IMR-90 (cell line): ENCODE measurements at regions of chr6 and their contacts with region 1.

Region 1: DNA sequence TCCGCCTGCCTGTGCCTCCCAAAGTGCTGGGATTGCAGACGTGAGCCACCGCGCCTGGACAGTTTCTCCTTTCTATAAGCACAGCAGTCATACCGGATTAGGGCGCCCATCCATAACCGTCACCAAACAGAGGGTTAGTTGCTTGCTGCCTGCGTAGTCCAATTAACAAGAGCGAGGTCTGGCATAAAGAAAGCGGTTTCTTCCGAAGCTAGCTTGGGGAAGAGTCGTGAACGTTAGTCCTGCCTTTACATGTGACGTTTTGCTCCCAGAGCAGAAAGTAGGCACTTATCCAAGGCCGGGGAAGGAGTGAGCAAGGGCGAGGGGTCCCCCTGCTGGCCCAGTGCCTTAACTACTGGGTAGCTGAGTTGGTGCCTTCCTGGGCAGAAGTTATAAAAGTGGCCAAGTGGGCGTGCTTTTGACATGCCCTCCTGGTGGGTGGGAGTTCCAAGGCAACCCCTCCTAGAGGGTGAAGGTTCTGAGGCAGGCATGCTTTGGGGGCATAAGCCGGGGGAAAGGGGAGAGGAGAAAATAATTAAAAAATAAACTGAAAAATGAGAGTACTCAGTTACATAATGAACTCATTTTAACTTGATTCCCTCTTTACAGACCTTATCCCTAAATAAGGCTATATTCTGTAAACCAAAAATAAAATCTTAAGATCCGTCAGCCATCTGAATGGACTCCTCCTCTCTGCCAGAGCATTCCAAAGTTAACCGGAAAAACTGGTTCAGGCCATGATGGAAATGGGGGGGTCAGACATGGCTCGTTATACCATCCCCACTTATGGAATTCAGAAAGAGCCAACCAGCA is 88.0 kb downstream of the FAM217A start:
- DNase-seq: peak; percentile 88
- ATAC-seq: peak; percentile 96
- H3K4me3 ChIP-seq: peak overlapping the region; percentile 5; the same call in 1 of the 2 replicates
- H3K27ac ChIP-seq: peak overlapping the region; percentile 11; the same call in 1 of the 2 replicates
- H3K4me1 ChIP-seq: peaks cover 6% of the 10 kb centered on the region
- H3K27me3 ChIP-seq: no peaks in the 10 kb centered on the region
- CTCF ChIP-seq: peak; percentile 97
- POLR2A ChIP-seq: no peak
- RAD21 ChIP-seq: peak; percentile 94

Region 2: GRCh38 chr6:3410385-3411360 is 580.2 kb before region 1 on chr6:
- CTCF ChIA-PET with region 1: no interaction called
- POLR2A ChIA-PET with region 1: no interaction called
- dilution Hi-C with region 1: no loop called
- in situ Hi-C with region 1: no loop called
- intact Hi-C with region 1: loop called (anchors 10 kb)
- DNase-seq: peak; percentile 57
- ATAC-seq: peak; percentile 62
- H3K4me3 ChIP-seq: no peak overlapping the region
- H3K27ac ChIP-seq: no peak overlapping the region
- H3K4me1 ChIP-seq: no peaks in the 10 kb centered on the region
- H3K27me3 ChIP-seq: peaks cover 15% of the 10 kb centered on the region
- CTCF ChIP-seq: peak; percentile 66
- POLR2A ChIP-seq: no peak
- RAD21 ChIP-seq: peak; percentile 72

Region 3: DNA sequence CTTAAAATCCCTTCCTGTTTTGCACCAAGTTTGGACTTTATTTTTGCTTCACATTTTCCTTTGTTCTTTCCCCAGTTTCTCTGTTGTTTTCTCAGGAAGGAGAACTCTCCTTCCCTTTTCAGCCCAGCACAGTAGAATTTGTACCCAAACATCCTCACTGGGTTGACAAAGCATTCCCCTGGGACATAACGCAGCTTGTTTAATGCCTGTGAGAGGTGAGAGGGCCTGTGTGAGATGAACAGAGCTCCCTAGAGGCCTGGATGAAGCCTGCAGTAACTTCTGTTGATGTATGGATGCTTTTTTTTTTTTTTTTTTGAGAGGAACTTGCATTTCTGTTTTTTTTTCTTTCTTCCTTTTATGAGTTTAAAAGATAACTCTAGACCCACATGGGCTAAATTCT is 429.2 kb before region 1 on chr6:
- CTCF ChIA-PET with region 1: no interaction called
- POLR2A ChIA-PET with region 1: no interaction called
- dilution Hi-C with region 1: no loop called
- in situ Hi-C with region 1: no loop called
- intact Hi-C with region 1: no loop called
- DNase-seq: peak; percentile 35
- ATAC-seq: peak; percentile 42; the same call in 1 of the 2 replicates
- H3K4me3 ChIP-seq: no peak overlapping the region
- H3K27ac ChIP-seq: no peak overlapping the region
- H3K4me1 ChIP-seq: peaks cover 3% of the 10 kb centered on the region; the same call in 1 of the 2 replicates
- H3K27me3 ChIP-seq: peaks cover 49% of the 10 kb centered on the region
- CTCF ChIP-seq: 0 out of 2 replicates have a peak, but pooled peaks have one; percentile 22
- POLR2A ChIP-seq: no peak
- RAD21 ChIP-seq: no peak; the same call in 1 of the 2 replicates